WTC11 (cell line): ENCODE measurements at regions of chr9 and their contacts with region 1.

Region 1: DNA sequence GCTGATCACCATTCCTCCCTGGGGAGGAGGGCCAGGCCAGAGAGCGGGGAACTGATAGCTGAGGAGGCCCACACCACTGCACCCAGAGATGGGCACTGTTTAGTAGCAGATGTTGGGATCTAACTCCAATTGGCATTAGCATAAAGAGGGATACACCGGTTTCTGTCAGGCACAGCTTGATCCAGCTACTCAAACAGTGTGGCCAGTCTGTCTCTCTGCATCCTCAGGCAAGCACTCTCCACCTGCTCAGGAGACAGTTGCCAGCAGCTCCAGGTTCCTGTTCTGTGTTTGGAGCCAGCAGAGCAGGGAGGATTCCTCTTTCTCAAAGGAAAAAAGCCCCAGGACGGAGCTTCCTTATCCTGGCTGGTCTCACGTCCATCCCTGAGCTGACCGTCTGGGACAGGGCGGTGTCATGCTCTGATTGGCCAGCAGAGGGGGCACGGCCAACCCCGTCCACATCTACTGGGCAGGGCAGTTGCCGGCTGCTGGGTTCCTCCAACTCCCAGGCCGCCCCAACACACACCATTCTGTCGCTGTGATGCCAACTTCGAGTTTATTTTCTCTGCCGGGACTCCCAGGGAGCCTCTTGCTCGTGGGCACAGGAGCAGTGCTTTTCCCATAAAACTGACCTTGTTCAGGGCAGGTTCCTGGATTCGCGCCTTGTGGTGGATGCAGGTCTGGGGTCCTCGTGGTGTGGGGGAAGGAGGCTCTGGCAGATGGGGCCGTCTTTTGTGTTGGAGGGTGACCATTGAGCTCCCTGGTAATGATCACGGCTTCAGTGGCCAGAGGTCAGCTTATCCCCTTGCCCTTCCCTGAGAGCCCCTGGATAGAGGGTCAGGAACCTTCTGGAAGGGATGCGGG is 47.9 kb downstream of the COL5A1 start:
- DNase-seq: peak; percentile 84
- ATAC-seq: peak; percentile 98
- H3K4me3 Mint-ChIP-seq: no peak overlapping the region
- H3K27ac Mint-ChIP-seq: no peak overlapping the region
- H3K4me1 Mint-ChIP-seq: no peaks in the 10 kb centered on the region
- H3K27me3 Mint-ChIP-seq: no peaks in the 10 kb centered on the region
- CTCF ChIP-seq: peak; percentile 88

Region 2: DNA sequence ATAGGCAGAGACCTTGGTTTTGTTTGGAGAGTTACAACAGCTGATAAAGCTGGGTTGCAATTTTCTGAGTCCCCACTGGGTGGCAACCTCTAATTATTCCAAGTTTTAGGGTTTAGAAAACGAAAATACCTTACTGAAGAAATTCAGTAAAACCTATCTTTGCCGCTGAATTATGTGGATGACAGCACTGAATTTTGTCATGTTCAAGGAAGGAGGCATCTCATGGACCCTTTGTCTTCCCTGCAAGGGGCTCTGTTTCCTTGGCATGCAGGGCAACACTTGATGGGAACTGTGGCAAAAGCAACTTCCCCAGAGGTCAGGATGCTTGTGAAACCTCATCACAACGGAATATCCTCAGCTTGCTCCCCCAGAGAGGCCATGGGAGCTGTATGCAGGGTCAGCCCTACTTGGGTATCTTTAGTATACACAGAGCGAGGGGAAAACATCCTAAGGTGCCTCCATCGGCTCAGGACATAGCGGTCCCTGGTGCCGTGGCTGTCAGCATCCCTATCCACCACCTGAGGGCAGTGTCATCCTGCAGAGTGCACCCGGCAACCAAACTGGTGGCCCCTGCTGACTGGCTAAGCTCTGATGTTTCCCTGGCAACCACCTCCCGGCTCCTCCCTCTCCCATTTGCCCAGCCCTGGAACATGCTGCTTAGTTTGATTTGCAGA is 240.2 kb before region 1 on chr9:
- CTCF ChIA-PET with region 1: interaction called, 30 read pairs
- POLR2A ChIA-PET with region 1: no interaction called
- DNase-seq: peak; percentile 91
- ATAC-seq: peak; percentile 99
- H3K4me3 Mint-ChIP-seq: no peak overlapping the region
- H3K27ac Mint-ChIP-seq: no peak overlapping the region
- H3K4me1 Mint-ChIP-seq: no peaks in the 10 kb centered on the region
- H3K27me3 Mint-ChIP-seq: peaks cover 3% of the 10 kb centered on the region; the same call in 1 of the 2 replicates
- CTCF ChIP-seq: peak; percentile 58

Region 3: DNA sequence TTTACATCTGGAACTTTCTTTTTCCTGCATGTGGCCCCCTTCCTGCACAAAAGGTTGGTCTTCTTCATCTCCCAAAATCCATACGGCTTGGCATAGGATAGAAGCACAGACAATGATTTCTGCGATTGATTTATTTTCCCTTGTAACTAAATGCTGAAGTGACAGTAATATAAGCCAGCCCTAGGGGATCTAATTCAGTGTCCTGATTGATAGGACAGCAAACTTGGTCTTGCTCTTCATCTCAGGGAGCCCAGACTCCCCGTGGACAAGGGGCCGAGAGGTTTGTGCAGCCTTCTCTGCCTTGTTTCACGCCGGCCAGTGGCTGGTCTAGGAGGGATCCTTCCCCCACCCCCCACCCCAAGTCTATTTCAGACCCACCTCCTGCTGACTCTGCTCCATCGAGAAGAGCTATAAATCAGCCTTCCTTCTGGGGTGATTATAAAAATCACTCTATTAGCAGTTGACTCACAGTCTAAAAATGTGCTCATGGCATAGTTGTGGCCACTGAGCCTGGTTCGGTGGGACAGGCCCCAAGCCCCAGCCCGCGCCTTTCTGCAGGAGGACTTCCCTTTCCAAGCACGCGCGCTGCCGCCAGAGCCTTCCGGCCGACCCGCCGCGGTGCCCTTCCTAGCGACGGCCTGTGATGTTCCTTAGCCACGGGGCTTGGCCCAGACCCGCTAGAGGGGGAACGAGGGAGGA is 137.8 kb before region 1 on chr9:
- CTCF ChIA-PET with region 1: no interaction called
- POLR2A ChIA-PET with region 1: no interaction called
- DNase-seq: no peak
- ATAC-seq: no peak
- H3K4me3 Mint-ChIP-seq: no peak overlapping the region
- H3K27ac Mint-ChIP-seq: no peak overlapping the region
- H3K4me1 Mint-ChIP-seq: 0 out of 2 replicates have a peak, but pooled peaks cover 2% of the 10 kb centered on the region
- H3K27me3 Mint-ChIP-seq: no peaks in the 10 kb centered on the region
- CTCF ChIP-seq: no peak

Region 4: DNA sequence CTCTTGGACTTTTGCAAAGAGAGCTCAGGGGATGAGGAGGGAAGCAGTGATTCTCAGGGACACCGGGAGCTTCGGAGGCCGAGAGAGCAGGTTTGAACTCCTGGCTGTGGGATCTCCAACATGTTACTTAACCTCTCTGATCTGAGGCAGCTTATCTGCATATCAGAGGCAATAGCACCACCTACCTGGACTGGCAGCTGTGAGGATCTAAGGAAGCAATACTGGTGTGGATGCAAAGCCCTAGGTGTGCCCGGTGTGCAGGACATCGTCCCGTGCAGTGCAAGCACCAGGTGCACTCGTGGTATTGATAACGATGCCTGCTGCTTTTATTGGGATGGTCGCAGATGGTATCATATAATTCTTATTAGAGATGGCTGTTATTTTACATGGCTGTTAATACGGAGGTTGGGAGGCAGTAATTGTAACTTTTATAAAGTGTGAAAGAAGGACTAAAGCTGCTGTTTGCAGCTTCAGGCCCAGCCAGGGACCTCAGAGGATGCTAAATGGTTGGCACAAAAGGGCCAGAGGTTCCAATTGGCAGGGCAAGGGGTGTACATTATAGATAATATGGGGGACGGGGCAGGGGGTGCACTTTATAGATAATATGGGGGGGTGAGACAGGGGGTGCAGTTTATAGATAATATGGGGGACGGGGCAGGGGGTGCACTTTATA is 33.1 kb before region 1 on chr9:
- CTCF ChIA-PET with region 1: interaction called, 10 read pairs
- POLR2A ChIA-PET with region 1: no interaction called
- DNase-seq: no peak
- ATAC-seq: peak; percentile 51
- H3K4me3 Mint-ChIP-seq: no peak overlapping the region
- H3K27ac Mint-ChIP-seq: no peak overlapping the region
- H3K4me1 Mint-ChIP-seq: peaks cover 9% of the 10 kb centered on the region
- H3K27me3 Mint-ChIP-seq: no peaks in the 10 kb centered on the region; the same call in 1 of the 2 replicates
- CTCF ChIP-seq: no peak

Region 5: GRCh38 chr9:134738869-134739659 is 49.5 kb after region 1 on chr9:
- CTCF ChIA-PET with region 1: interaction called, 17 read pairs
- POLR2A ChIA-PET with region 1: no interaction called
- DNase-seq: peak; percentile 83
- ATAC-seq: peak; percentile 88
- H3K4me3 Mint-ChIP-seq: no peak overlapping the region
- H3K27ac Mint-ChIP-seq: peak overlapping the region; percentile 58
- H3K4me1 Mint-ChIP-seq: peaks cover 7% of the 10 kb centered on the region
- H3K27me3 Mint-ChIP-seq: no peaks in the 10 kb centered on the region
- CTCF ChIP-seq: peak; percentile 86

Region 6: GRCh38 chr9:136075881-136076678 is 1386.5 kb after region 1 on chr9:
- CTCF ChIA-PET with region 1: no interaction called
- POLR2A ChIA-PET with region 1: interaction called, 10 read pairs
- DNase-seq: no peak
- ATAC-seq: no peak
- H3K4me3 Mint-ChIP-seq: no peak overlapping the region
- H3K27ac Mint-ChIP-seq: peak overlapping the region; percentile 47
- H3K4me1 Mint-ChIP-seq: 0 out of 2 replicates have a peak, but pooled peaks cover 2% of the 10 kb centered on the region
- H3K27me3 Mint-ChIP-seq: no peaks in the 10 kb centered on the region
- CTCF ChIP-seq: no peak